AG04450 (cell line): ENCODE measurements at regions of chr15 and their contacts with region 1.

Region 1: GRCh38 chr15:50003786-50004334 is 115.2 kb downstream of the ATP8B4 start:
- DNase-seq: peak; percentile 70
- H3K4me3 ChIP-seq: no peak overlapping the region
- H3K27ac ChIP-seq: no peak overlapping the region
- H3K27me3 ChIP-seq: no peaks in the 10 kb centered on the region
- CTCF ChIP-seq: peak; percentile 89

Region 2: GRCh38 chr15:49235446-49236124 is 768.3 kb before region 1 on chr15:
- CTCF ChIA-PET with region 1: interaction called, 19 read pairs
- POLR2A ChIA-PET with region 1: no interaction called
- DNase-seq: peak; percentile 77
- H3K4me3 ChIP-seq: no peak overlapping the region
- H3K27ac ChIP-seq: no peak overlapping the region
- H3K27me3 ChIP-seq: no peaks in the 10 kb centered on the region
- CTCF ChIP-seq: peak; percentile 76

Region 3: GRCh38 chr15:49901996-49902684 is 101.7 kb before region 1 on chr15:
- CTCF ChIA-PET with region 1: interaction called, 21 read pairs
- POLR2A ChIA-PET with region 1: no interaction called
- DNase-seq: no peak
- H3K4me3 ChIP-seq: no peak overlapping the region
- H3K27ac ChIP-seq: peak overlapping the region; percentile 40
- H3K27me3 ChIP-seq: no peaks in the 10 kb centered on the region
- CTCF ChIP-seq: peak; percentile 62

Region 4: GRCh38 chr15:49990835-49991545 is 12.9 kb before region 1 on chr15:
- CTCF ChIA-PET with region 1: interaction called, 17 read pairs
- POLR2A ChIA-PET with region 1: interaction called, 9 read pairs
- DNase-seq: peak; percentile 81
- H3K4me3 ChIP-seq: no peak overlapping the region
- H3K27ac ChIP-seq: no peak overlapping the region
- H3K27me3 ChIP-seq: no peaks in the 10 kb centered on the region
- CTCF ChIP-seq: no peak

Region 5: GRCh38 chr15:50051803-50052419 is 48.1 kb after region 1 on chr15:
- CTCF ChIA-PET with region 1: interaction called, 25 read pairs
- POLR2A ChIA-PET with region 1: no interaction called
- DNase-seq: peak; percentile 61
- H3K4me3 ChIP-seq: no peak overlapping the region
- H3K27ac ChIP-seq: no peak overlapping the region
- H3K27me3 ChIP-seq: no peaks in the 10 kb centered on the region
- CTCF ChIP-seq: peak; percentile 85